HCT116 (cell line): ENCODE measurements at regions of chr14 and their contacts with region 1.

Region 1: DNA sequence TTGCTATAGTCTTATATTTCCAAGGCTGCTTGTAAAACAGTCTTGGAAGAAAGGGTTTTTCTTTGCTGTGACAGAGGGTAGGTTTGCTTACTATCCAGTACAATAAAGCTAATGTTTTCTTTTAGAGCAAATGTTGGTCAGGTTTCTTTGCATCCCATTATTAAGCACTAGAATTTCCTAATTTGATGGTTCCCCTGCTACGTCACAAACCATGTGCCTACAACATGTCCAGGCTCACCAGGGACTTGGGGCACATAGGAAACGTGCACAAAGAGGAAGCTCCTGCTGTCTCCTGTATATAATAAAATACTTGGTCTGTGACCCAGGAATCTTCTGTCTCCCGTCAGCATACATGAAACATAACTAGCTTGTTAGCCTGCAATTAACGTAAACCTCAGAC is 486.3 kb upstream of the LRFN5 start:
- DNase-seq: no peak
- ATAC-seq: no peak
- H3K4me3 ChIP-seq: no peak overlapping the region
- H3K27ac ChIP-seq: no peak overlapping the region
- H3K4me1 ChIP-seq: no peaks in the 10 kb centered on the region
- H3K27me3 ChIP-seq: no peaks in the 10 kb centered on the region
- CTCF ChIP-seq: no peak
- POLR2A ChIP-seq: no peak
- RAD21 ChIP-seq: no peak

Region 2: DNA sequence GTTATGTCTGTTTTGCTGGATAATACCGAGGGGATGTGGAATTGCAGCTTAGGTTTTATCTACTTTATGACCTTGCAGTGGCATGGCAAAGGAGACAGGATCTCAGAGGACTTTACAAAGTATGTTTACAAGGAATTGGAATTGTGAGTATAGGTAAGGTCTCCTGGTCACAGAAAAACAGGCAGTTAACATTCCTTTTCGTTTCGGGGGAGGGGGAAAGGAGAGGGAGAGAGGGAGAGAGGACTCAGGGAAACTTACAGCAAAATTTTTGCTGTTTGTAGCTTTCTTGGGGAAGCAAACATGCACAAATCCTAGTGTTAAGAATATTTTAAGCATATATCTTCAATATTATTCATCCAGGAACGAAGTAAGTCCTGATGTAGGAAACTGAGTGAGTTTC is 104.2 kb before region 1 on chr14:
- CTCF ChIA-PET with region 1: no interaction called
- POLR2A ChIA-PET with region 1: no interaction called
- RAD21 ChIA-PET with region 1: no interaction called
- intact Hi-C with region 1: no loop called
- DNase-seq: no peak
- ATAC-seq: no peak
- H3K4me3 ChIP-seq: no peak overlapping the region
- H3K27ac ChIP-seq: no peak overlapping the region
- H3K4me1 ChIP-seq: no peaks in the 10 kb centered on the region
- H3K27me3 ChIP-seq: no peaks in the 10 kb centered on the region
- CTCF ChIP-seq: no peak
- POLR2A ChIP-seq: no peak
- RAD21 ChIP-seq: no peak

Region 3: DNA sequence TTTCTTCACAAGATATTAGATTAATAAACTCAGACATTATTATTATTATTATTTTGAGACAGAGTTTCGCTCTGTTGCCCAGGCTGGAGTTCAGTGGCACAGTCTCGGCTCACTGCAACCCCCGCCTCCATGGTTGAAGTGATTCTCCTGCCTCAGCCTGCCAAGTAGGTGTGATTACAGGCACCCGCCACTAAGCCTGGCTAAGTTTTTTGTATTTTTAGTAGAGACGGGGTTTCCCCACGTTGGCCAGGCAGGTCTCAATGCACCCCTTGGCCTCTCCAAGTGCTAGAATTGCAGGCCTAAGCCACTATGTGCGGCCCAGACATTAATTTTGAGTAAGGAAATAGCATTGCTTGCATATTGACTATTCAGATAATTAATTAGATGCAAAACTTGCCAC is 68.6 kb before region 1 on chr14:
- CTCF ChIA-PET with region 1: no interaction called
- POLR2A ChIA-PET with region 1: no interaction called
- RAD21 ChIA-PET with region 1: no interaction called
- intact Hi-C with region 1: loop called (anchors 10 kb)
- DNase-seq: no peak
- ATAC-seq: no peak
- H3K4me3 ChIP-seq: no peak overlapping the region
- H3K27ac ChIP-seq: no peak overlapping the region
- H3K4me1 ChIP-seq: no peaks in the 10 kb centered on the region
- H3K27me3 ChIP-seq: no peaks in the 10 kb centered on the region
- CTCF ChIP-seq: no peak
- POLR2A ChIP-seq: no peak
- RAD21 ChIP-seq: no peak

Region 4: GRCh38 chr14:41393512-41393911 is 273.1 kb after region 1 on chr14:
- CTCF ChIA-PET with region 1: no interaction called
- POLR2A ChIA-PET with region 1: no interaction called
- RAD21 ChIA-PET with region 1: no interaction called
- intact Hi-C with region 1: no loop called
- DNase-seq: no peak
- ATAC-seq: no peak
- H3K4me3 ChIP-seq: no peak overlapping the region
- H3K27ac ChIP-seq: no peak overlapping the region
- H3K4me1 ChIP-seq: no peaks in the 10 kb centered on the region
- H3K27me3 ChIP-seq: no peaks in the 10 kb centered on the region
- CTCF ChIP-seq: no peak
- POLR2A ChIP-seq: no peak
- RAD21 ChIP-seq: no peak

Region 5: GRCh38 chr14:41449086-41449485 is 328.7 kb after region 1 on chr14:
- CTCF ChIA-PET with region 1: no interaction called
- POLR2A ChIA-PET with region 1: no interaction called
- RAD21 ChIA-PET with region 1: no interaction called
- intact Hi-C with region 1: no loop called
- DNase-seq: no peak
- ATAC-seq: no peak
- H3K4me3 ChIP-seq: no peak overlapping the region
- H3K27ac ChIP-seq: no peak overlapping the region
- H3K4me1 ChIP-seq: no peaks in the 10 kb centered on the region
- H3K27me3 ChIP-seq: no peaks in the 10 kb centered on the region
- CTCF ChIP-seq: no peak
- POLR2A ChIP-seq: no peak
- RAD21 ChIP-seq: no peak